Left ventricle myocardium inferior (tissue), 1 donor: ENCODE measurements at regions of chr11 and their contacts with region 1.

Region 1: GRCh38 chr11:74255741-74256369 is 55.6 kb downstream of the P4HA3 start:
- DNase-seq: no peak
- H3K4me3 ChIP-seq: no peak overlapping the region
- H3K27ac ChIP-seq: no peak overlapping the region
- H3K4me1 ChIP-seq: no peaks in the 10 kb centered on the region
- H3K27me3 ChIP-seq: no peaks in the 10 kb centered on the region
- CTCF ChIP-seq: peak; percentile 93

Region 2: DNA sequence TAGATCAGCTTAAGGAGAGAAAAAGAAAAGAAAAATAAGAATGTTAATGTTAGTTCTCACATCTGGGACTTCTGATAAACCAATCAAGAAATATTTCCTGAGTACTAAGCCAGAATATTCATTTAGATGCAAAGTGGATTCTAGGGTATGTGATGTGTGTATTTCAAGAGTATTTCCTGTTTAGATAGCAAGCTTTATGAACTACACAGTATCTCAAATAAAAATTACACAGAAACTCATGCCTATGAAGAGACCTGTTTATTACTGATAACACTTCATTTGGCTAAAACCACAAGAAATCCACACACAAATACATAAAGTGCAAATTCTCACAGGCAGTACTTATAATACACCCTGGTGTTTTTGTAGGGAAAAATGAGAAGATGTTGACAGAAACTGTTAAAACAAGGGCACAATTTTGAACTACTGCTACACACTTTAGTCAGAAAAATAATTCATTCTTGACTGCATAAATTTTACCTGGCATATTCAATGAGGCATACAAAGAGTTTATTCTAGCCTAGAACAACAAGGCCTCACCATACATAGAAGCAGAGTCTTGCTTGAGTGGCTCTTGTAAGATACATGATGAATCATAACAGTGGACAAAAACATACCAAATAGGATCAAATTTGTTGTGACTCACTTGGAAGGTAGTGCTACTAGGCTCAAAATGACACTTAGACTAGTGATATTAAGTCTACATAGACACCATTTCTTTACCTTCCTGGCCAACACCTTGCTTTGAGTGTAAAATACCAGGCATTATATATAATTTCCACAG is 74.4 kb after region 1 on chr11:
- intact Hi-C with region 1: loop called (anchors 10 kb)
- DNase-seq: no peak
- H3K4me3 ChIP-seq: no peak overlapping the region
- H3K27ac ChIP-seq: no peak overlapping the region
- H3K4me1 ChIP-seq: peaks cover 20% of the 10 kb centered on the region
- H3K27me3 ChIP-seq: no peaks in the 10 kb centered on the region
- CTCF ChIP-seq: no peak

Region 3: GRCh38 chr11:74354036-74354435 is 98.2 kb after region 1 on chr11:
- intact Hi-C with region 1: no loop called
- DNase-seq: no peak
- H3K4me3 ChIP-seq: no peak overlapping the region
- H3K27ac ChIP-seq: no peak overlapping the region
- H3K4me1 ChIP-seq: no peaks in the 10 kb centered on the region
- H3K27me3 ChIP-seq: no peaks in the 10 kb centered on the region
- CTCF ChIP-seq: no peak